ENCODE measurements at regions of chr6 and their contacts with region 1.

Region 1: GRCh38 chr6:24394780-24395437 is 7.8 kb upstream of the MRS2 start:
- DNase-seq: peak in 2 of 14 experiments; percentile 8 to 12
- ATAC-seq: no peak
- H3K4me3 ChIP-seq: no peak overlapping the region
- H3K4me3 Mint-ChIP-seq: no peak overlapping the region
- H3K27ac ChIP-seq: no peak overlapping the region
- H3K27ac Mint-ChIP-seq: no peak overlapping the region
- H3K4me1 ChIP-seq: no peaks in the 10 kb centered on the region
- H3K4me1 Mint-ChIP-seq: no peaks in the 10 kb centered on the region
- H3K27me3 ChIP-seq: peaks cover 13 to 23% of the 10 kb centered on the region in 2 experiments
- H3K27me3 Mint-ChIP-seq: peaks cover 34% of the 10 kb centered on the region
- CTCF ChIP-seq: no peak

Region 2: GRCh38 chr6:24359640-24360454 is 35.1 kb before region 1 on chr6:
- CTCF ChIA-PET with region 1: no interaction called
- POLR2A ChIA-PET with region 1: no interaction called
- intact Hi-C with region 1: loop called in 1 of 2 experiments (anchors 2 kb)
- DNase-seq: peak; percentile 65 to 91 (median 76)
- ATAC-seq: peak; percentile 90
- H3K4me3 ChIP-seq: peak overlapping the region; percentile 49
- H3K4me3 Mint-ChIP-seq: peak overlapping the region; percentile 83
- H3K27ac ChIP-seq: no peak overlapping the region
- H3K27ac Mint-ChIP-seq: peak overlapping the region; percentile 21
- H3K4me1 ChIP-seq: peaks cover 22% of the 10 kb centered on the region
- H3K4me1 Mint-ChIP-seq: peaks cover 34% of the 10 kb centered on the region
- H3K27me3 ChIP-seq: peaks cover 0 to 2% of the 10 kb centered on the region in 2 experiments
- H3K27me3 Mint-ChIP-seq: peaks cover 9% of the 10 kb centered on the region
- CTCF ChIP-seq: peak; percentile 84